ENCODE measurements at regions of chr12 and their contacts with region 1.

Region 1: GRCh38 chr12:14340371-14340770 is 25.1 kb upstream of the ATF7IP start:
- DNase-seq: no peak
- ATAC-seq: no peak
- H3K4me3 ChIP-seq: no peak overlapping the region
- H3K27ac ChIP-seq: no peak overlapping the region
- H3K4me1 ChIP-seq: no peaks in the 10 kb centered on the region
- H3K27me3 ChIP-seq: no peaks in the 10 kb centered on the region
- CTCF ChIP-seq: no peak
- POLR2A ChIP-seq: no peak

Region 2: GRCh38 chr12:14290951-14291350 is 49.4 kb before region 1 on chr12:
- intact Hi-C with region 1: loop called in 1 of 10 experiments (anchors 10 kb)
- DNase-seq: no peak
- ATAC-seq: no peak
- H3K4me3 ChIP-seq: no peak overlapping the region
- H3K27ac ChIP-seq: no peak overlapping the region
- H3K4me1 ChIP-seq: peaks cover 0 to 4% (median 0%) of the 10 kb centered on the region in 12 donors
- H3K27me3 ChIP-seq: no peaks in the 10 kb centered on the region
- CTCF ChIP-seq: no peak
- POLR2A ChIP-seq: no peak